Panc1 (cell line): ENCODE measurements at regions of chr2 and their contacts with region 1.

Region 1: GRCh38 chr2:172239944-172240590 is 137.4 kb upstream of the DLX2 start:
- DNase-seq: no peak
- ATAC-seq: no peak
- H3K4me3 ChIP-seq: no peak overlapping the region
- H3K27ac ChIP-seq: no peak overlapping the region
- H3K4me1 ChIP-seq: no peaks in the 10 kb centered on the region
- H3K27me3 ChIP-seq: peaks cover 17% of the 10 kb centered on the region
- CTCF ChIP-seq: no peak

Region 2: GRCh38 chr2:172179045-172179701 is 60.9 kb before region 1 on chr2:
- CTCF ChIA-PET with region 1: no interaction called
- POLR2A ChIA-PET with region 1: no interaction called
- in situ Hi-C with region 1: no loop called
- intact Hi-C with region 1: no loop called
- DNase-seq: no peak
- ATAC-seq: no peak
- H3K4me3 ChIP-seq: no peak overlapping the region
- H3K27ac ChIP-seq: no peak overlapping the region
- H3K4me1 ChIP-seq: no peaks in the 10 kb centered on the region; the same call in 1 of the 2 replicates
- H3K27me3 ChIP-seq: no peaks in the 10 kb centered on the region
- CTCF ChIP-seq: no peak

Region 3: GRCh38 chr2:172270278-172271079 is 30.4 kb after region 1 on chr2:
- CTCF ChIA-PET with region 1: no interaction called
- POLR2A ChIA-PET with region 1: no interaction called
- in situ Hi-C with region 1: no loop called
- intact Hi-C with region 1: no loop called
- DNase-seq: no peak
- ATAC-seq: no peak
- H3K4me3 ChIP-seq: no peak overlapping the region
- H3K27ac ChIP-seq: no peak overlapping the region
- H3K4me1 ChIP-seq: no peaks in the 10 kb centered on the region
- H3K27me3 ChIP-seq: no peaks in the 10 kb centered on the region; the same call in 1 of the 2 replicates
- CTCF ChIP-seq: no peak

Region 4: GRCh38 chr2:172484253-172484652 is 244.2 kb after region 1 on chr2:
- CTCF ChIA-PET with region 1: interaction called, 14 read pairs
- POLR2A ChIA-PET with region 1: no interaction called
- in situ Hi-C with region 1: no loop called
- intact Hi-C with region 1: no loop called
- DNase-seq: no peak
- ATAC-seq: no peak
- H3K4me3 ChIP-seq: no peak overlapping the region
- H3K27ac ChIP-seq: no peak overlapping the region
- H3K4me1 ChIP-seq: no peaks in the 10 kb centered on the region
- H3K27me3 ChIP-seq: no peaks in the 10 kb centered on the region
- CTCF ChIP-seq: peak; percentile 51